Mammary epithelial cell (primary cell): ENCODE measurements at regions of chr15 and their contacts with region 1.

Region 1: DNA sequence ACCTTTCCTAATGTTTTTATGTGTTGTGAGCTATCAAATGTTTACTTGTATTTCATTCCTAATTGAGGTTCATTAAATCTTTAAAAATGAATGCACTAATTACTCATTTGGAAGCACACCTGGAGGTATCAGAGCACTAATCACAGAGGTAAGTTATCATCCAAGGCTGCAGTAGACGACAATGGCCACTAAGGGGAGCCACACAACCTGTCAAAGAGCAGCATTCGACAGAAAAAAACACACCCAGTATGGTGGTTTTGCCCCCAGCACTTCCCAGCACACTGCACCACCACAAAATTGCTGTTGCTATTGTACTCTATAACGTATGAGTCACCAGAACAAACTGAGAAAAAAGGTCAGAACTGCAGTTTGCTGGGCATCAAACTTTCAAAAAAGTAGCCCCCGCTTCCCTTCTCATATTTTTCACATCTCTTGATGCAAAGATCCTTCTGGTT is 205.9 kb upstream of the IGF1R start:
- DNase-seq: peak; percentile 86
- H3K4me3 ChIP-seq: no peak overlapping the region
- H3K27ac ChIP-seq: no peak overlapping the region
- H3K4me1 ChIP-seq: peaks cover 6% of the 10 kb centered on the region
- H3K27me3 ChIP-seq: no peaks in the 10 kb centered on the region
- CTCF ChIP-seq: peak; percentile 89 to 97

Region 2: DNA sequence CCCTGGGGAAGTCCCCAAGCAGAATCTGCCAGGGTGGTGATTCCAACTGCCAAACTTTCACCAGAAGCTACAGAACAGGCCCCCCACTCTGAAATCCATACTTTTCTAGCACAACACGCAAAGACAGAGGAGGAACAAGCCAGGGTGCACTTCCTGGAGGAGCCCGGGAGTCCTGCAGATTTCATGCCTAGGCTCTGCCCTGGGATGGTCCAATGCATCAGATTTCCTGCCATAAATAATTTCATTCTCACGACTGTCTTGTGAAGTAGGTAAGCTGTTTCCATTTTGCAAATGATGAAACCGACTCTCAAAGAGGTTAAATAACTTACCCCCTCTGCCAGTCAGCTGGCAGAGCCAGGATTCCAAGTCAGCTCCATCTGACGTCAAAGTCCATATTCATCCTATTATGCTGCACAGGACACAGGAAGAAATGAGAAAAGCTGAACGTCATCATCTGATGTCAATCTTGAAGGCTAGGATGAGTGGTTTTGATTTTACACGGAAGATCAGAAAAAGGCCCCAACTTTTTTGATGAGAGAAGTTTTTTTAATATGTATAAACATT is 71.1 kb after region 1 on chr15:
- CTCF ChIA-PET with region 1: no interaction called
- dilution Hi-C with region 1: loop called (anchors 5 kb)
- in situ Hi-C with region 1: no loop called
- intact Hi-C with region 1: no loop called
- DNase-seq: no peak
- H3K4me3 ChIP-seq: no peak overlapping the region
- H3K27ac ChIP-seq: no peak overlapping the region
- H3K4me1 ChIP-seq: no peaks in the 10 kb centered on the region
- H3K27me3 ChIP-seq: no peaks in the 10 kb centered on the region
- CTCF ChIP-seq: no peak

Region 3: DNA sequence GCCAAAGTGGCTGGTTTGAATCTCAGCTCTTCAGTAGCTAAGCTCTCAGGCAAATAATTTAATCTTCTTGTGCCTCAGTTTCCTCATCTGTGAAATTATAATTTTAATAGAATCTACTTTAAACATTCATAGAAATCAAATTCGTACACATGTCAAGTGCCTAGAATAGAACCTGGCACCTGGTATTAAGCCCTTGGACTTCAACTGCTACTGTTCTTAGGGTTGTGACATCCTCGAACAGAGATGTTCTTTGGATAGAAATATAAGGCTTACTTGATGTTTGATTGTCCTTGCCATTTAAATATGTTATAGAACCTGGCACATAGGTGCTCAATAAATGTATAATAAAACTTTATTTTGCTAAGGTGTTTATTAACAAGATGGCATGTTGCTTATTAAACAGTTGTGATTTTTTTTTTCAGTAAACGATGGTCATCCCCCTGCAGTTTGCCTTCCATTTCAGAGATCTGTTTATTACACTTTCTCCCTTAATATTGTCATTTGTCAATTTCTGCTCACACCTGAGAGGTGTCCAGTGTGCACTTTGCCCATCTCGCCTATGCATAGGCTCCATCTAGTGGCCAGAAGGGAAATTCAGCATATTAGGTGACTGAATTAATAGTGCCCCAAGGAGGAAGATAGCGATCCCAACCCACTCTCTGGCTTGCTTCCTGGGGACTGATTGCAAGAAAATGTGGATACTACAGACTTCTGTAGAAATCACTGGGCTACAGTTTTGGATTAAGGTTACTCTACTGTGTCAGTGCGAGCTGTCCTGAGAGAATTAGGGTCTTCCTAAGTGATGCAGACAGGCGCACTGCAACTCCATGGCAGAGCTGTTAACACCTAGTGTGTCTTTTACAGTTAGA is 216.7 kb after region 1 on chr15:
- CTCF ChIA-PET with region 1: no interaction called
- dilution Hi-C with region 1: no loop called
- in situ Hi-C with region 1: loop called in 1 of 2 experiments (anchors 10 kb)
- intact Hi-C with region 1: loop called (anchors 1 kb)
- DNase-seq: peak; percentile 60
- H3K4me3 ChIP-seq: no peak overlapping the region
- H3K27ac ChIP-seq: no peak overlapping the region
- H3K4me1 ChIP-seq: peaks cover 49% of the 10 kb centered on the region
- H3K27me3 ChIP-seq: no peaks in the 10 kb centered on the region
- CTCF ChIP-seq: peak; percentile 91